AG04449 (cell line): ENCODE measurements at regions of chr3 and their contacts with region 1.

Region 1: GRCh38 chr3:107660306-107660976 is 137.7 kb downstream of the BBX start:
- DNase-seq: peak; percentile 53
- H3K4me3 ChIP-seq: no peak overlapping the region
- CTCF ChIP-seq: peak; percentile 37

Region 2: DNA sequence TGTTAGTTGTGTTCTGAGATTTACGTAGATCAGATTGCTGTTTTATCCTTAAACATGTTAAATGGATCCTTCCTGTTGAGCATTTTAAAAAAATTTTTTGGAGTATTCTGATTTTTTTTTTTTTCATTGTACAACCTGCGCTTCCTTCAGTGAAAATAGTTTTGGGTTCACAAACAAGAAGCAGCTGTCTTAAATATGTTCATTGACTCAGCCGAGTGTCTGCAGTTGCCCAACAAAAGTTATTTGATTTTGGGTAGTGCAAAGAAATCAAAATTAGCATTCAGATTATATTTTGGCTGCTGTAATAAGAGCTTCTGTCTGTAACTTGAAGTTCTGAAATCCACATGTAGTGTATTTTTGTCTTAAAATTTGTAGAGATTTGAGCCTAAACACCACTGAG is 10.5 kb after region 1 on chr3:
- CTCF ChIA-PET with region 1: interaction called, 172 read pairs
- POLR2A ChIA-PET with region 1: no interaction called
- DNase-seq: no peak
- H3K4me3 ChIP-seq: no peak overlapping the region
- CTCF ChIP-seq: no peak

Region 3: GRCh38 chr3:107690522-107691138 is 30.2 kb after region 1 on chr3:
- CTCF ChIA-PET with region 1: interaction called, 172 read pairs
- POLR2A ChIA-PET with region 1: no interaction called
- DNase-seq: no peak
- H3K4me3 ChIP-seq: no peak overlapping the region
- CTCF ChIP-seq: peak; percentile 23

Region 4: GRCh38 chr3:107753480-107753879 is 93.0 kb after region 1 on chr3:
- CTCF ChIA-PET with region 1: interaction called, 30 read pairs
- POLR2A ChIA-PET with region 1: no interaction called
- DNase-seq: no peak
- H3K4me3 ChIP-seq: no peak overlapping the region
- CTCF ChIP-seq: peak; percentile 60

Region 5: GRCh38 chr3:108477511-108478147 is 817.2 kb after region 1 on chr3:
- CTCF ChIA-PET with region 1: interaction called, 12 read pairs
- POLR2A ChIA-PET with region 1: no interaction called
- DNase-seq: no peak
- H3K4me3 ChIP-seq: no peak overlapping the region
- CTCF ChIP-seq: peak; percentile 64